Breast epithelium (tissue), 4 donors: ENCODE measurements at regions of chr16 and their contacts with region 1.

Region 1: GRCh38 chr16:8130197-8130596 is 460.1 kb downstream of the TMEM114 start:
- DNase-seq: no peak
- H3K4me3 ChIP-seq: no peak overlapping the region
- H3K27ac ChIP-seq: no peak overlapping the region
- H3K4me1 ChIP-seq: no peaks in the 10 kb centered on the region
- H3K27me3 ChIP-seq: no peaks in the 10 kb centered on the region
- CTCF ChIP-seq: no peak
- POLR2A ChIP-seq: no peak

Region 2: GRCh38 chr16:7503666-7504065 is 626.5 kb before region 1 on chr16:
- intact Hi-C with region 1: loop called (anchors 5 kb)
- DNase-seq: no peak
- H3K4me3 ChIP-seq: no peak overlapping the region
- H3K27ac ChIP-seq: no peak overlapping the region
- H3K4me1 ChIP-seq: no peaks in the 10 kb centered on the region
- H3K27me3 ChIP-seq: no peaks in the 10 kb centered on the region
- CTCF ChIP-seq: no peak
- POLR2A ChIP-seq: no peak

Region 3: GRCh38 chr16:7524419-7524818 is 605.8 kb before region 1 on chr16:
- intact Hi-C with region 1: no loop called
- DNase-seq: no peak
- H3K4me3 ChIP-seq: no peak overlapping the region
- H3K27ac ChIP-seq: no peak overlapping the region
- H3K4me1 ChIP-seq: no peaks in the 10 kb centered on the region
- H3K27me3 ChIP-seq: no peaks in the 10 kb centered on the region
- CTCF ChIP-seq: no peak
- POLR2A ChIP-seq: no peak

Region 4: DNA sequence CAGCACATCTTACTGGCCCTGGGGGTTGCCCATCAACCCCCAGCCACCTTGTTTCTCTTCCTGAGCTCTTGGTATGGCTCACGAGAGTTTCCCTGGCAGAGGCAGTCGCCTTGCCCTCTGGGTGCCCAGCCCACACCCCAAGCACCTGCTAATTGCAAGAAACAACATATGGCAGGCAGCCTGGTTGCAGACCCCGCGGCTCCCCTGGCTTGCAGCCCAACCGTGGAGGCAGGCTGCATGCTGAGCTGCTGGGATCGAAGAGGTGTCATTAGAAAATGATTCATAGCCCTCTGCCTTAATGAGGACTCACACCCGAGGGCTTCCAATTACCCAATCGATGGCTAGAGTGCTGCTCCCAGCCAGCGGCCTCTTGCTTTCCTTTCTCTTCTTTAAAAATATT is 344.4 kb after region 1 on chr16:
- intact Hi-C with region 1: no loop called
- DNase-seq: no peak
- H3K4me3 ChIP-seq: no peak overlapping the region
- H3K27ac ChIP-seq: no peak overlapping the region
- H3K4me1 ChIP-seq: no peaks in the 10 kb centered on the region
- H3K27me3 ChIP-seq: peaks cover 0 to 4% of the 10 kb centered on the region in 2 donors
- CTCF ChIP-seq: no peak
- POLR2A ChIP-seq: no peak